Caco-2 (cell line): ENCODE measurements at regions of chr10 and their contacts with region 1.

Region 1: GRCh38 chr10:59073456-59074053 is 102.9 kb upstream of the PHYHIPL start:
- DNase-seq: peak; percentile 91 to 94
- H3K4me3 ChIP-seq: no peak overlapping the region
- H3K4me3 Mint-ChIP-seq: no peak overlapping the region
- H3K27ac Mint-ChIP-seq: no peak overlapping the region
- H3K4me1 ChIP-seq: peaks cover 55% of the 10 kb centered on the region
- H3K4me1 Mint-ChIP-seq: peaks cover 13% of the 10 kb centered on the region
- H3K27me3 ChIP-seq: no peaks in the 10 kb centered on the region
- H3K27me3 Mint-ChIP-seq: no peaks in the 10 kb centered on the region
- CTCF ChIP-seq: no peak

Region 2: DNA sequence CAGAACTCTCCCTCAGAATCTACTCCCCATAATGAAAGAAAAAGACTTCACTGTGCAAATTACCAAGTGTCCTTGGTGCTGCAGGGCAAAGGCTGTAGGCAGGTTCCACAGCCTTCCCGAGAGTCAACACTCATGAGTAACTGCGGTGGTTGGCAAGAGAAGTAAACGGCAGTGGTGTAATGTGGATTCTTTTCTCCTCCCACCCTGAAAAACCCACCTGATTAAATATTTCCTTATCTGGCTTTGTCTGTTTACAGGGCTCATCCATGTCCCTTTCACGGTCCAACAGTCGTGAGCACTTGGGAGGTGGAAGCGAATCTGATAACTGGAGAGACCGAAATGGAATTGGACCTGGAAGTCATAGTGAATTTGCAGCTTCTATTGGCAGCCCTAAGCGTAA is 260.0 kb before region 1 on chr10:
- CTCF ChIA-PET with region 1: interaction called, 3 read pairs
- POLR2A ChIA-PET with region 1: no interaction called
- intact Hi-C with region 1: loop called (anchors 1 kb)
- DNase-seq: peak; percentile 81 to 84
- H3K4me3 ChIP-seq: no peak overlapping the region
- H3K4me3 Mint-ChIP-seq: peak overlapping the region; percentile 67
- H3K27ac Mint-ChIP-seq: peak overlapping the region; percentile 85
- H3K4me1 ChIP-seq: peaks cover 69% of the 10 kb centered on the region
- H3K4me1 Mint-ChIP-seq: peaks cover 80% of the 10 kb centered on the region
- H3K27me3 ChIP-seq: no peaks in the 10 kb centered on the region
- H3K27me3 Mint-ChIP-seq: no peaks in the 10 kb centered on the region
- CTCF ChIP-seq: no peak

Region 3: GRCh38 chr10:59006511-59007306 is 66.8 kb before region 1 on chr10:
- CTCF ChIA-PET with region 1: no interaction called
- POLR2A ChIA-PET with region 1: interaction called, 4 read pairs
- intact Hi-C with region 1: loop called (anchors 1 kb)
- DNase-seq: no peak
- H3K4me3 ChIP-seq: no peak overlapping the region
- H3K4me3 Mint-ChIP-seq: peak overlapping the region; percentile 2
- H3K27ac Mint-ChIP-seq: peak overlapping the region; percentile 68
- H3K4me1 ChIP-seq: peaks cover 76% of the 10 kb centered on the region
- H3K4me1 Mint-ChIP-seq: peaks cover 55% of the 10 kb centered on the region
- H3K27me3 ChIP-seq: no peaks in the 10 kb centered on the region
- H3K27me3 Mint-ChIP-seq: no peaks in the 10 kb centered on the region
- CTCF ChIP-seq: no peak

Region 4: GRCh38 chr10:59108886-59109288 is 35.3 kb after region 1 on chr10:
- CTCF ChIA-PET with region 1: no interaction called
- POLR2A ChIA-PET with region 1: no interaction called
- intact Hi-C with region 1: loop called (anchors 1 kb)
- DNase-seq: peak in 1 of 2 experiments; percentile 66
- H3K4me3 ChIP-seq: no peak overlapping the region
- H3K4me3 Mint-ChIP-seq: peak overlapping the region; percentile 34
- H3K27ac Mint-ChIP-seq: peak overlapping the region; percentile 80
- H3K4me1 ChIP-seq: peaks cover 42% of the 10 kb centered on the region
- H3K4me1 Mint-ChIP-seq: peaks cover 41% of the 10 kb centered on the region
- H3K27me3 ChIP-seq: no peaks in the 10 kb centered on the region
- H3K27me3 Mint-ChIP-seq: no peaks in the 10 kb centered on the region
- CTCF ChIP-seq: no peak

Region 5: DNA sequence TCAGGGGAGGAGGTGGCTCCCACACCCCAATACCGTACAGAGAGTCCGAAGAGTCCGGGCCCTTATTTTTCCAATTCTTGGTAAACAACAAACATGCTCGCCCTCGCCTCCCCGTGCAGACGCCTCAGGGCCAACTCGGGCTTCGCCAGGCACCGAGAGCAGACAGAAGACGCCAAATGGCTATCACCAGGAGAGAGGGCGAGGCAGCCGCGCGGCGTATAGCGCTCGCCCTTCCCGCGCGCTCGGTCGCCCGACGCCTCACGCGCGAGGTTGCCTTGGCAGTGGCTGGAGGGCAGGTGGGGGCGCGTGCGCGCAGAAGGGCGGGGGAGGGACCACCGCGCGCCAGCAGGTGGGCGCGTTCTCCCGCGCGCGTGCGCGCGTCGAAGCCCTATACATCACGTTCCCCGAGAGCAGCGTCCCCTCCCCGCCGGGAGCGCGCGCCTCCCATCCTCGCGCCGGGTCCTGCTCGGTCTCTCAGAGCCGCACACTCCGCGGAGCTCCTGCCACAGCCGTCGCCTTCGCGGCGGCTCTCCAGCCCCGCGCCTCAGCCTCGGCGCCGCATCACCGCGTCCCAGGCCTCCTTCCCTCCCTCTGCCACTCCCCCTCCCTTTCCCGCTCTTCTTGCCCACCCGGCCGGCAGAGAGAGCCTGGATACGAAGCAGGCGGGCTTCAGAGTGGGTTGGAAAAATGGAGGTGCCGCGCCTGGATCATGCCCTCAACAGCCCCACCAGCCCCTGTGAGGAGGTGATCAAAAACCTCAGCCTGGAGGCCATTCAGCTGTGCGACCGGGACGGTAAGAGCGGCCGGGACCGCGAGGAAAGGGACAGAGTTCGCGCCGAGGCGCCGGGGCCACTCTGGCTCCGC is 102.8 kb after region 1 on chr10 and contains the start of gene PHYHIPL:
- CTCF ChIA-PET with region 1: no interaction called
- POLR2A ChIA-PET with region 1: no interaction called
- intact Hi-C with region 1: loop called (anchors 1 kb)
- DNase-seq: peak; percentile 77 to 84
- H3K4me3 ChIP-seq: peak within 1 kb of the TSS; percentile 97
- H3K4me3 Mint-ChIP-seq: peak within 1 kb of the TSS; percentile 90
- H3K27ac Mint-ChIP-seq: peak within 1 kb of the TSS; percentile 60
- H3K4me1 ChIP-seq: peaks cover 39% of the 10 kb centered on the region
- H3K4me1 Mint-ChIP-seq: peaks cover 25% of the 10 kb centered on the region
- H3K27me3 ChIP-seq: no peaks in the 10 kb centered on the region
- H3K27me3 Mint-ChIP-seq: no peaks in the 10 kb centered on the region
- CTCF ChIP-seq: no peak
- total RNA-seq, gene PHYHIPL: 48.1 and 50.2 TPM in 2 replicates